ENCODE measurements at regions of chr3 and their contacts with region 1.

Region 1: GRCh38 chr3:38004415-38005076 is 14.0 kb downstream of the VILL start:
- DNase-seq: peak; percentile 81
- H3K4me3 Mint-ChIP-seq: no peak overlapping the region
- H3K27ac Mint-ChIP-seq: no peak overlapping the region
- H3K4me1 Mint-ChIP-seq: peaks cover 23% of the 10 kb centered on the region
- H3K27me3 Mint-ChIP-seq: no peaks in the 10 kb centered on the region
- CTCF ChIP-seq: peak; percentile 69

Region 2: GRCh38 chr3:37291275-37291700 is 713.3 kb before region 1 on chr3:
- CTCF ChIA-PET with region 1: no interaction called
- POLR2A ChIA-PET with region 1: no interaction called
- intact Hi-C with region 1: no loop called
- DNase-seq: peak; percentile 27
- H3K4me3 Mint-ChIP-seq: no peak overlapping the region
- H3K27ac Mint-ChIP-seq: peak overlapping the region; percentile 59
- H3K4me1 Mint-ChIP-seq: peaks cover 14% of the 10 kb centered on the region
- H3K27me3 Mint-ChIP-seq: no peaks in the 10 kb centered on the region
- CTCF ChIP-seq: no peak

Region 3: DNA sequence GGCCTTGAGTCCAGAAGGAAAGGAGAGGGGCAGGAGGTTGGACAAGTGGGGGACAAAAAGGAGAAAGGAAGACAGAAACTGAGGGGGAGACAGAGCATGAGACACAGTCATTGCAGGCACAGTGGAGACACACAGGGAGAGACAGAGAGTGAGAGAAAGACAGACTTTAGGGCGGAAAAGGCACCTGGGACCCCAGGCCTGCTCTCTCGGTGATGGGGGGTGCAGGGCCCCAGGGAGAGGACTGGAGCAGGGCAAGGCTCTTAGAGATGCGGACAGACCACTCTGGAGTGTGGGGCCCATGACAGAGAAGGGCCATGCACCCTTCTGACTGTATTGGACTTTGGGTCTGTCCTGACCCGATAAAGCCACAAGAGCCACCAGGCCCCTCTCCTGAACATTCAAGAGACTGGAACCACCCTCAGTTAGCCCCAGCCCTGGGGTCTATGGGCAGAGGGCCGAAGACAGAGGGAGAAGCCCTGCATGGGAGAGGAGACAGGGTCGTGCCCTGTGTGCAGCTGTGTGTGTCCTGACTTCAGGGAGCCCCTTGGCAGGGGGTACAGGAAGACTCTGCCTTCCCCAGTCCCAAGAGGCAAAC is 12.4 kb after region 1 on chr3:
- CTCF ChIA-PET with region 1: interaction called, 38 read pairs
- POLR2A ChIA-PET with region 1: no interaction called
- intact Hi-C with region 1: no loop called
- DNase-seq: no peak
- H3K4me3 Mint-ChIP-seq: no peak overlapping the region
- H3K27ac Mint-ChIP-seq: no peak overlapping the region
- H3K4me1 Mint-ChIP-seq: no peaks in the 10 kb centered on the region
- H3K27me3 Mint-ChIP-seq: no peaks in the 10 kb centered on the region
- CTCF ChIP-seq: no peak

Region 4: DNA sequence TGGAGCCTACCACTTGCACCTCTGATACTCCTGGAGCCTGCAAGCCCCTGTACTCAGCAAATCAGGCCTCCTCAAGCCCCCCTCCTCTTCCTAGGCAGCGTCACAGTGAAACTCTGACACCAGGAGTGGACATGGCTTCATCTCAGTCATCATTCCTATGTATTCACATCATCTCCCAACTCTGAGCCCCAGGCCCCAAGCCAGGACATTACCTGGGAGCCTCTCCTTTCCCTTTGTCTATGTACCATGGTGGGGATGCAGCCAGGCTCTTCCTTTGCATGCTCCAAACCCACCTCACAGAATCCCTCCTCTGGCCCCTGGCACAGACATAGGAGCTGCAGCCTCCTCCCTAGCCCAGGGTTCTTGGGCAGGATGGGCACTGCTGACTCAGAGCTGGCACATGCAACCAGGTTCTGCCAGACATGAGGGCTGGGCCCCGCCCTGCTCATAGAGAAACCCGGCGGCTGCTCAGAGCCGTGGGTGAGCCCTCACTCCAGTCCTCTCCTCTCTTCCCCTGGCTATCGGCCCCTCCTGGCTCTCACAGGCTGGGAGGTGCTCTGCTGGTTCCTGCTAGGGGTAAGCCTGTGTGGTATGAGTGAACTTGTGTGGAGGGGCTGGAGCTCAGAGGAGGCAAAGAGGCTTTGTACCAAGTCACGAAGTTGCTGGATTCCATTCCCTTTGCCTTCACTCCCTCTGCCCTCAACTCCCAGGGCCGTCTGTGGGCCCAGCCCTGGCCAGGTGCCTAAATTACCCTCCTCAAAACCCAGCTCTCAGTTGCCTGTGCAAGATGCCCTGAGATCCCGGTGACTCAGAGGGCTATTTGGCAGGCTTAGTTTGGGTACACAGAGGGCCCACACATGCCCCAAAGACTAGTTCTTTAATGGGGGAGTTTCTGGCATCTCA is 26.7 kb after region 1 on chr3:
- CTCF ChIA-PET with region 1: interaction called, 10 read pairs
- POLR2A ChIA-PET with region 1: no interaction called
- intact Hi-C with region 1: no loop called
- DNase-seq: peak; percentile 93
- H3K4me3 Mint-ChIP-seq: peak overlapping the region; percentile 5
- H3K27ac Mint-ChIP-seq: peak overlapping the region; percentile 78
- H3K4me1 Mint-ChIP-seq: peaks cover 19% of the 10 kb centered on the region
- H3K27me3 Mint-ChIP-seq: no peaks in the 10 kb centered on the region
- CTCF ChIP-seq: no peak

Measured in MCF 10A (cell line).